B cell (primary cell): ENCODE measurements at regions of chr19 and their contacts with region 1.

Region 1: DNA sequence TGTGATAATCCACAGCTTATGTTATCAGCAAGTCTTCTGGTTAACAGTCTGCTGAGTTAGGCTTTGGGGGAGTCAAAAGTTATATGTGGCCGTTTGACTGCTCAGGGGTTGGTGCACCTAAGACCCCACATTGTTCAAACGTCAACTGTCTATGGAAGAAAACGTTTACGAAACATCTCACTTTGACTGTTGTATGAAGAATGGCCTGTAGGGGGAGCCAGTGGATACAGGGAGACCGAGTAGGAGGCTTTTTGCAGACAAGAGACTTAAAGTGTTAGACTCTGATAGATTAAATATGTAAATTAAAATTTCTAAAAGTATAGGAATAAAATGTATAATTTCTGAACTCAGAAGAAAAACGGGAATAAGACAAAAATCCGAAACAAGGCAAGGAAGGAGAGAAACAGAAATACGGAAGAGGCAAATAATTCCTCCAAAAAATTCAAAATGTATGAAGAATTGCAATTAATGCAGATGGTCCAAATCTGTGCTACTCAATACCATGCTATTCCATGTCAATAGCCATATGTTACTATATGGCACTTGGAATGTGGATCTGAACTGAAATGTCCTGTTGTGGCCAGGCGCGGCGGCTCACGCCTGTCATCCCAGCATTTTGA is 37.8 kb downstream of the TNFSF14 start:
- DNase-seq: peak; percentile 87
- ATAC-seq: peak; percentile 78
- H3K4me3 ChIP-seq: no peak overlapping the region
- H3K4me3 Mint-ChIP-seq: no peak overlapping the region
- H3K27ac ChIP-seq: no peak overlapping the region
- H3K27ac Mint-ChIP-seq: no peak overlapping the region
- H3K4me1 ChIP-seq: peaks cover 5 to 8% of the 10 kb centered on the region in 2 donors
- H3K4me1 Mint-ChIP-seq: peaks cover 26% of the 10 kb centered on the region
- H3K27me3 ChIP-seq: no peaks in the 10 kb centered on the region
- H3K27me3 Mint-ChIP-seq: peaks cover 3% of the 10 kb centered on the region
- CTCF ChIP-seq: peak; percentile 92

Region 2: DNA sequence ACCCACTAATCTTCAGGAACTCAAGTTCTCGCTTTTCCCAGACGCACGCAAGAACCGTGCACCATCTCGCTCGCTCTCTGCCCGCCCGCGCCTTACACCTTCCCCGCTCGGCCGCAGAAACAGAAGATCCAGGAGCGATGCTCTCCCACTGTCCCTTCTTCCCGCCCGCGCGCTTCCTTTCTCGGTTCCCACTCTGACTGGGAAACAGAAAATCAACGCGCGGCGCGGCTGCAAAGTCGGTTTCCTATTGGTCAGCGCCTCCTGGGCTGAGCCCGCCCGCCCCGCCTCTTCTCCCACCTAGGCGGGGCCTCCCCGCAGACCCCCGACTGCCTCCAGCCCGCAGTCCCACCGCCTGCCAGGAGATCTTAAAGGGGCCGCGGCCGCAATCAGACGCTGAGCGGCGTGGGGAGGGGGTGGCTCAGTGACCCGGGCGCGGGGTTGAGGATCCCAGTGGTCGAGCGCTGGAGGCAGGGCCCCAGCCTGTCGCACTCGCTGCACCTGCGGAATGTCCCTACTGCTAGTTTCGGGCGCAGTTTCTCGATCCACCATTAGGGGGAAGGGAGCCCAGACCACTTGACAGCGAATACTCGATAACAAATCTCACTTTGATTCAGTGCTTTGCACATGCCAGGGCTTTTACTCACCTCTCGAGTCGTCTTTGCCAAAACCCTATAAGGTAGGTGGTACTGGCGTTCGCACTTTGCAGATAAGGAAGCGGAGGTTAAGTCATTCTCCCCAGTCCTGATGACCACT is 171.8 kb before region 1 on chr19:
- CTCF ChIA-PET with region 1: no interaction called
- POLR2A ChIA-PET with region 1: no interaction called
- intact Hi-C with region 1: loop called (anchors 2 kb)
- DNase-seq: peak; percentile 99
- ATAC-seq: peak; percentile 84
- H3K4me3 ChIP-seq: peak overlapping the region; percentile 60 to 93 (median 78)
- H3K4me3 Mint-ChIP-seq: peak overlapping the region; percentile 91
- H3K27ac ChIP-seq: peak overlapping the region; percentile 76 to 86
- H3K27ac Mint-ChIP-seq: peak overlapping the region; percentile 78
- H3K4me1 ChIP-seq: peaks cover 11 to 34% of the 10 kb centered on the region in 2 donors
- H3K4me1 Mint-ChIP-seq: peaks cover 32% of the 10 kb centered on the region
- H3K27me3 ChIP-seq: peaks cover 0 to 15% (median 6%) of the 10 kb centered on the region in 4 experiments
- H3K27me3 Mint-ChIP-seq: no peaks in the 10 kb centered on the region
- CTCF ChIP-seq: peak; percentile 78

Region 3: DNA sequence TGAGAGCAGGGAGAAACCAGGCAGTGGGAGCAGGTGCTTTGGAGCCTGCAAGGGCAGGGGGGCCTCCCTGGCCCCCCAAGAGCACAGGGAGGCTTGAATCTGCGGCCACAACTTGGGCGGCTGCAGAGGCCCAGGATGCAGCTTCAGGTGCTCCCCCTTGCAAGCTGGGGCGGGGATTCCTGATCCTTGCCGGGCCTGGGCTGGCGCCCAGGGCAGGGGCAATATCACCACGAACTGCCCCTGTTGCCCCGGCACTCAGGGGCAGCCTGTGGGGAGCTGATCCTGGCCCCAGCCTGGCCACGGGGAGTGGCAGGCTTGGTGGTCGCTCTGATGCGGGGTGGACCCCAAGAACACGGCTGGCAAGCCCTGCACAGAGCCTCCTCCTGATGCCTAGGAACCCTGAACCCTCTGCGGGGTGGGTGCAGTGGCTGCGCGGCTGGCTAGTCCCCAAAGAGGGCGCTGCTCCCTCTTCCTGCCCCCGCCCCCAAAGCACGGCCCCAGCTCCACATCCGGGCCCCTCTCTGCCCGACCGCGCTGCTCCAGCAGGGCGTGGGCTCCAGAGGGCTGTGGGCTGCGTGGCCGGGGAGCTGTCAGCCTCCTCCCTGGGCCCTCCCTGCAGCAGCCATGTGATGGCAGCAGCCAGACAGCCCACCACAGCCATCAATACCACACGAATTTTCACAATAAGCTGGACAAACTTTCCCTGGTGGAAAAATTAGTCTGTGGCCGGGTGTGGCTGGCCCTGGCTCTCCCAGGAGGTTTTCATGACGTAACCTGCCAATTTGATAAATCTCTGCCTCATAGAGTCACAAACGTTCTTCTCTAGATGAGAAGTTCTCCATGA is 80.3 kb before region 1 on chr19:
- CTCF ChIA-PET with region 1: interaction called, 26 read pairs
- POLR2A ChIA-PET with region 1: interaction called, 6 read pairs
- intact Hi-C with region 1: no loop called
- DNase-seq: peak; percentile 60
- ATAC-seq: peak; percentile 92
- H3K4me3 ChIP-seq: peak overlapping the region in 2 of 5 experiments; percentile 20 to 36
- H3K4me3 Mint-ChIP-seq: peak overlapping the region; percentile 59
- H3K27ac ChIP-seq: no peak overlapping the region
- H3K27ac Mint-ChIP-seq: peak overlapping the region; percentile 53
- H3K4me1 ChIP-seq: peaks cover 9 to 11% of the 10 kb centered on the region in 2 donors
- H3K4me1 Mint-ChIP-seq: peaks cover 7% of the 10 kb centered on the region
- H3K27me3 ChIP-seq: peaks cover 0 to 2% (median 0%) of the 10 kb centered on the region in 4 experiments
- H3K27me3 Mint-ChIP-seq: no peaks in the 10 kb centered on the region
- CTCF ChIP-seq: peak; percentile 47

Region 4: DNA sequence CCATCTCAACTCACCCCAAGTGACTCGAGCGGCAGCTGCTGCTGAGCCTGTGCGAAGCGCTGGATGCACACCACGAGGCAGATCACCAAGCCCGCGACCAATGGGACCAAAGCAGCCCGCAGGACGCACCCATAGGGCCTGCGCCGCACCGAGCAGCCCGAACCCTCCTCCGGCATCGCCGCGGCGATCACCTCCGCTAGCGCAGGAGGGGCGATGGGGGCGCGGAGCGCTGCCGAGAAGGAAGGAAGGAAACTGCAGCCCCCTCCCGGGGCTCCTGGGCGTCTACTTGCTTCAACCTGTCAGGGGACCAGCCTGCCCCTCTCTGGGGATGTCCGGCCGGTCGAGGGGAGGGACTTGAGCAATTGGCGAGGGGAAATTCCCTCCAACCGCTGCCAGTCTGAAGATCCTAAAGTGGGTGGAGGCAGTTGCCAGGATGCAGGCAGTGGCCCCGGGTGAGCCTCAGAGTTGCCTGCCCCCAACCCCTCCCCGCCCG is 41.2 kb before region 1 on chr19 and contains the start of gene CD70:
- CTCF ChIA-PET with region 1: interaction called, 10 read pairs
- POLR2A ChIA-PET with region 1: interaction called, 3 read pairs
- intact Hi-C with region 1: loop called (anchors 2 kb)
- DNase-seq: peak; percentile 76
- ATAC-seq: peak; percentile 52
- H3K4me3 ChIP-seq: peak within 1 kb of the TSS in 4 of 5 experiments; percentile 16 to 60 (median 52)
- H3K4me3 Mint-ChIP-seq: peak within 1 kb of the TSS; percentile 99
- H3K27ac ChIP-seq: peak within 1 kb of the TSS in 1 of 2 donors; percentile 53
- H3K27ac Mint-ChIP-seq: peak within 1 kb of the TSS; percentile 93
- H3K4me1 ChIP-seq: peaks cover 55 to 56% of the 10 kb centered on the region in 2 donors
- H3K4me1 Mint-ChIP-seq: peaks cover 59% of the 10 kb centered on the region
- H3K27me3 ChIP-seq: peaks cover 0 to 45% (median 9%) of the 10 kb centered on the region in 4 experiments
- H3K27me3 Mint-ChIP-seq: peaks cover 32% of the 10 kb centered on the region
- CTCF ChIP-seq: no peak
- total RNA-seq, gene CD70: 48.5 and 49.1 TPM in 2 replicates

Region 5: GRCh38 chr19:6801485-6802086 is 169.5 kb after region 1 on chr19:
- CTCF ChIA-PET with region 1: interaction called, 8 read pairs
- POLR2A ChIA-PET with region 1: no interaction called
- intact Hi-C with region 1: loop called (anchors 5 kb)
- DNase-seq: peak; percentile 95
- ATAC-seq: peak; percentile 74
- H3K4me3 ChIP-seq: peak overlapping the region; percentile 32 to 68 (median 61)
- H3K4me3 Mint-ChIP-seq: peak overlapping the region; percentile 95
- H3K27ac ChIP-seq: peak overlapping the region; percentile 75 to 83
- H3K27ac Mint-ChIP-seq: peak overlapping the region; percentile 98
- H3K4me1 ChIP-seq: peaks cover 44 to 83% of the 10 kb centered on the region in 2 donors
- H3K4me1 Mint-ChIP-seq: peaks cover 68% of the 10 kb centered on the region
- H3K27me3 ChIP-seq: no peaks in the 10 kb centered on the region
- H3K27me3 Mint-ChIP-seq: no peaks in the 10 kb centered on the region
- CTCF ChIP-seq: no peak